ENCODE measurements at regions of chr14 and their contacts with region 1.

Region 1: DNA sequence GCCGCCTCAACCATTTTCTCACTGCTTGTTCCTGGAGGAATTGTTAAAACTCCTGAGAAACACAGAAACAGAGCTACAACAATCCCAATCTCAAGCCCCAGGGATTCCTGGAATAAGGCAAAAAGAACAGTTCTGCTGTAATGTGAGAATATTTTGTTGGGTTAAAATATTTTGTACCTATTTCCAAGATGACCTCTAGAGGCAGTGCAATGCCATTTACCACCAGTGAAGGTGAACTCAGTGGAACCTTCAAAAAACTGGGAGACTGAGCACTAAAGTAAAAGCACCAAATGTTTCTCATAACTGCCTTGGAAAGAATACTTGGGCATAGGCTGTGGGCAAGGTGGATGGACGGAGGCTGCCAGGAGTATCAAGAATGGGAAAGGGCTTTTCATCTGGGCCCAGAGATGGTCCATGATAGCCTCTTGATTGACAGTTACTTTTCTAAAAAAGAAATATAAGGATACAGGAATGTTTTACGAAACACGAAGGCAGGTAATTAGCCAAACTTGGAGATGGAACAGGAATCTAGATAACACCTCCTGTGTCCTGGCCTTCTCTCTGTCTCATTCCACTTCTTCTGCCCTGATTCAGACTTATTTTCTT is 334.0 kb upstream of the FLRT2 start:
- DNase-seq: no peak
- ATAC-seq: no peak
- H3K4me3 ChIP-seq: no peak overlapping the region
- H3K27ac ChIP-seq: no peak overlapping the region
- H3K4me1 ChIP-seq: no peaks in the 10 kb centered on the region
- H3K27me3 ChIP-seq: no peaks in the 10 kb centered on the region

Region 2: GRCh38 chr14:85040046-85040445 is 155.9 kb before region 1 on chr14:
- intact Hi-C with region 1: no loop called
- DNase-seq: no peak
- ATAC-seq: no peak
- H3K4me3 ChIP-seq: no peak overlapping the region
- H3K27ac ChIP-seq: no peak overlapping the region
- H3K4me1 ChIP-seq: no peaks in the 10 kb centered on the region
- H3K27me3 ChIP-seq: no peaks in the 10 kb centered on the region

Region 3: GRCh38 chr14:85528080-85528896 is 332.3 kb after region 1 on chr14:
- intact Hi-C with region 1: loop called (anchors 10 kb)
- DNase-seq: no peak
- ATAC-seq: peak; percentile 56
- H3K4me3 ChIP-seq: peak overlapping the region; percentile 27 to 45
- H3K27ac ChIP-seq: no peak overlapping the region
- H3K4me1 ChIP-seq: no peaks in the 10 kb centered on the region
- H3K27me3 ChIP-seq: peaks cover 0 to 2% of the 10 kb centered on the region in 2 donors